ENCODE measurements at regions of chr7 and their contacts with region 1.

Region 1: DNA sequence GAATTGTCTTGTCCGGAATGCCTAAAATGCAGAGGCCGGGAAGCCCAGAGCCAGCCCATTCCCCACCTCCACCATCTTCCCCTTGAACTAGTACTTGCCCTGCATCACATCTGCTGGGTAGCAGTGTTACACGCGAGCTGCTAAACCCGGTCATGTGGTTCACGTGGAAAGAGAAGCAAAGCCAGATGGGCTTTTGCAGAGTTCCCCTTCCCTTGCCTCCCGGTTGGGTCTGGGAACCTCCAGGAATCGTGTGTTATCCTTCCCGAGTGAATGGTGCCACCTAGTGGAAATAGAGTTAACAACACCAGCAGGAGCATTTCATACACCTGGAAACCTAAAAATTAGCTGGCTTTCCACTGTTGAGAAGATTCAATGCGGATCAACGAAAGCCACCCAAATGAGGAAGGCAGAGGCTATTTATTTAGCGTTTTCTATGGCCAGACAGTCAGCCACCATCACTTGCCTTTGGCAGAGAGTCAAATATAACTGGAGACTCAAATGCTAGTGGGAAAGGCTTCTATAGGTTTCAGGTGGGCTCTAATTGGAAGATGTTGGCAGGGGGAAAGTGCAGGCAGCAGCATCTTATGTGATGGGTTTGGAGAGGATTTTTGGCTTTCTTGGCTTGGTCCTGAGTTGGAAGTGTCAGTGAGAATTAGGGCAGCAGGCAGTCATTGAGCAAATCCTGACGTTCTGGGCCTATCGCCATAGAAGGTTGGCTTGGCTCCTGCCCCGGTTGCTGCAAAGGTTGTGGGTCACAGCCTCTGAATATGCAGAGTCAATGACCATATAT is 12.9 kb upstream of the DENND2A start:
- DNase-seq: peak; percentile 40
- ATAC-seq: no peak
- H3K4me3 Mint-ChIP-seq: no peak overlapping the region
- H3K27ac Mint-ChIP-seq: no peak overlapping the region
- H3K4me1 Mint-ChIP-seq: peaks cover 20% of the 10 kb centered on the region
- H3K27me3 Mint-ChIP-seq: peaks cover 8% of the 10 kb centered on the region

Region 2: DNA sequence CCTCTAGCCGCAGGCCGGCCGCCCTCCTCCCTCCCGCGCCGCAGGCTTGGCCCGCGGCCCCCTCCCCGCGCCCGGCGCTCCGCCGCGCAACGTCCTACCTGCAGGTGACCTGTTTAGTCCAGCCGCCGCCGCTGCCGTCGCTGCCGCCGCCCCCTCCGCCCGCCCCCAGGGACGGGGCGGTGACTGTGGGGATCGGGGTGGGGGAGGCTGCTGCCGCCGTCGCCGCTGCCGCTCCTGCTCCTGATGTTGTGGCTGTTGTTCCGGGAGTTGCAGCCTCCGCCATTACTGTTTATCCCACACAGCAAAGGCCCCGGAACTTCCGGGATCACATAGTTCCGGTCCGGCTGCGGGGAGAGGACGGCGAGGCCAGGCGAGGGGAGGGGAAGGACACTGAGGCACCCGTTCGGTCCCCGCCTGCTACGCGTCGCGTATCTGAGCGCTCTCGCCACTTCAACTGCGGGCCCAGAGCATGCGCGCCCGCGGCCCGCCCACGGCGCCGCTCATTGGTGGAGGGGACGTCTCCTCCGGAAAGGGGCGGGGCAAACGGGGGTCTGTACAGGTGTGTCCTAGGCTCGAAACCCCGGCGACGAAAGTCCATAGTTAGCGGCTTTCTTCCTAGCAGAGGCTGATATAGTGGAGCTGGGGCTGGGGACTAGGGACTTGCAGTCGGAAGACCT is 174.3 kb before region 1 on chr7 and contains the start of gene MKRN1:
- CTCF ChIA-PET with region 1: interaction called, 16 read pairs
- POLR2A ChIA-PET with region 1: no interaction called
- DNase-seq: peak; percentile 93
- ATAC-seq: peak; percentile 93
- H3K4me3 Mint-ChIP-seq: peak within 1 kb of the TSS; percentile 98
- H3K27ac Mint-ChIP-seq: peak within 1 kb of the TSS; percentile 98
- H3K4me1 Mint-ChIP-seq: peaks cover 32% of the 10 kb centered on the region
- H3K27me3 Mint-ChIP-seq: peaks cover 10% of the 10 kb centered on the region
- total RNA-seq, gene MKRN1: 51.5 to 53.9 TPM

Region 3: GRCh38 chr7:140517546-140518369 is 135.8 kb before region 1 on chr7:
- CTCF ChIA-PET with region 1: interaction called, 11 read pairs
- POLR2A ChIA-PET with region 1: no interaction called
- DNase-seq: peak; percentile 73
- ATAC-seq: peak; percentile 86
- H3K4me3 Mint-ChIP-seq: no peak overlapping the region
- H3K27ac Mint-ChIP-seq: no peak overlapping the region
- H3K4me1 Mint-ChIP-seq: peaks cover 4% of the 10 kb centered on the region
- H3K27me3 Mint-ChIP-seq: no peaks in the 10 kb centered on the region

Region 4: DNA sequence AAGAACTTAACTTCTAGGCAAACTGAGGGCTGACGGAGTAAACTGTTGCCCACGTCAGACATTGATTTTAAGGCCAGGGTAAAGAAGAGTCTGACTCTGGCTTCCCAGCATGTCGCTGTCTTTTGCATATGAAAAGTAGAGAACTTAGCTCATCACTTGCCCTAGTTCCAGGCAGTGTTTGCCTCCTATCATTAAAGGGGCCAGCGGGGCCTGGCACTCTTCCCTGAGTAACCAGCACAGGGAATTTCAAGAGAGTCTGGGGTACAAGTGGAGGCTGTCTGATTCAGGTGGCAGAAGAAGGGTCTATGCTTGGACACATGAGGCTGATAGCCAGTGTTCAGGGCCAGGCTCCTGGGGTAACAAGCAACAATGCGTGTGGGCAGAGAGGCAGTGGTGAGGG is 17.7 kb before region 1 on chr7:
- CTCF ChIA-PET with region 1: no interaction called
- POLR2A ChIA-PET with region 1: no interaction called
- DNase-seq: no peak
- ATAC-seq: no peak
- H3K4me3 Mint-ChIP-seq: no peak overlapping the region
- H3K27ac Mint-ChIP-seq: no peak overlapping the region
- H3K4me1 Mint-ChIP-seq: peaks cover 9% of the 10 kb centered on the region
- H3K27me3 Mint-ChIP-seq: peaks cover 33% of the 10 kb centered on the region

Measured in activated CD8-positive, alpha-beta T cell treated with anti-CD3 and anti-CD28 coated beads, Interleukin-2, amount 10 ng/mL, durations not matched to agents 7 days and 5 days (primary cell).